Activated naive CD4-positive, alpha-beta T cell treated with anti-CD3 and anti-CD28 coated beads for 36 hours (primary cell): ENCODE measurements at regions of chr13 and their contacts with region 1.

Region 1: GRCh38 chr13:100129605-100130004 is 40.7 kb downstream of the PCCA start:
- DNase-seq: no peak
- H3K4me3 Mint-ChIP-seq: no peak overlapping the region
- H3K27ac Mint-ChIP-seq: no peak overlapping the region
- H3K4me1 Mint-ChIP-seq: peaks cover 23% of the 10 kb centered on the region
- H3K27me3 Mint-ChIP-seq: no peaks in the 10 kb centered on the region

Region 2: DNA sequence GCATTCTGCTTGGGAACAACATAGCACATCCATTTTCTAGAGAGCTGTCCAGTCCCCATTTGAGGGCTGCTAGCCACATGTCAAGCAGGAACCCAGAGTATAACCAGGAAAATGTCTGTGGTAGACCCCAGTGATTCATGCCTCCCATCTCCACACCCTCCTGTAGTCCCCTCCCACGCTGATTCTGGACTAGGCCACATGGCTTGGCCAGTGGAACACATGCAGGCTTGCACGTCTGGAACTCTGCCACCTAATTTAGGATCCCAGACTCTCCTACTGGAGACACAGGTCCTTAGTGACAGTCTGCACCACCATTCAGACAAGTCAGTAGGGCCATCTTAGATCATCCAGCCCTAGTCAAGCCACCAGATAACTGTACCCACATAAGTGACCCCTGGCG is 307.9 kb before region 1 on chr13:
- CTCF ChIA-PET with region 1: no interaction called
- intact Hi-C with region 1: loop called (anchors 1 kb)
- DNase-seq: no peak
- H3K4me3 Mint-ChIP-seq: no peak overlapping the region
- H3K27ac Mint-ChIP-seq: no peak overlapping the region
- H3K4me1 Mint-ChIP-seq: peaks cover 16% of the 10 kb centered on the region
- H3K27me3 Mint-ChIP-seq: no peaks in the 10 kb centered on the region

Region 3: DNA sequence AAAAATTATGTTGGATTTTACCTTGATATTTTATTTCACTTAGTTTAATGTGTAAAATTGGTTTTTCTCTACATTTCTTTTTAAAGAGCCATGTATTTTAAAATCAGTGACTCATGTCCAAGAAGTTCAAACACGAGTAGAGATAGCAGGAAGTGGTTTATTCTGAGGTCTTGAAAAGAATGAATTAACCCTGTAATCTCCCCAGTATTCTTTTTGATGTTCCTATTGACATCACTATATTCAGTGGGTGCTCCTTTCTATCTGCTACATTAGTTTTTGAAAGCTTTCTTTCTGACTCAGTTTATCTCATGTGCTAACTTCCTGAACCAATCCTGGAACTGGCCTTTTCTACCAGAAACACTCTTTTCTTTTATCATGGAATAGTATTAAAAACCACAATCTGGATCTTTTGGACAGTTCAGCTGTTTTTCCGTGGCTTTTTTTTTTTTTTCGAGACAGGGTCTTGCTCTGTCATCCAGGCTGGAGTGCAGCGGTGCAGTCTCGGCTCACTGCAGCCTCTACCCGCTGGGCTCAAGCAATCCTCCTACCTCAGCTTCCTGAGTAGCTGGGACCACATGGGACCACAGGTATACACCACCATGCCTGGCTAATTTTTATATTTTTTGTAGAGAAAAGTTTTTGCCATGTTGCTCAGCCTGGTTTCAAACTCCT is 74.2 kb after region 1 on chr13:
- CTCF ChIA-PET with region 1: no interaction called
- intact Hi-C with region 1: loop called (anchors 1 kb)
- DNase-seq: peak; percentile 8
- H3K4me3 Mint-ChIP-seq: no peak overlapping the region
- H3K27ac Mint-ChIP-seq: peak overlapping the region; percentile 47
- H3K4me1 Mint-ChIP-seq: peaks cover 17% of the 10 kb centered on the region
- H3K27me3 Mint-ChIP-seq: no peaks in the 10 kb centered on the region

Region 4: GRCh38 chr13:100461309-100462030 is 331.9 kb after region 1 on chr13:
- CTCF ChIA-PET with region 1: no interaction called
- intact Hi-C with region 1: no loop called
- DNase-seq: no peak
- H3K4me3 Mint-ChIP-seq: no peak overlapping the region
- H3K27ac Mint-ChIP-seq: no peak overlapping the region
- H3K4me1 Mint-ChIP-seq: no peaks in the 10 kb centered on the region
- H3K27me3 Mint-ChIP-seq: no peaks in the 10 kb centered on the region

Region 5: DNA sequence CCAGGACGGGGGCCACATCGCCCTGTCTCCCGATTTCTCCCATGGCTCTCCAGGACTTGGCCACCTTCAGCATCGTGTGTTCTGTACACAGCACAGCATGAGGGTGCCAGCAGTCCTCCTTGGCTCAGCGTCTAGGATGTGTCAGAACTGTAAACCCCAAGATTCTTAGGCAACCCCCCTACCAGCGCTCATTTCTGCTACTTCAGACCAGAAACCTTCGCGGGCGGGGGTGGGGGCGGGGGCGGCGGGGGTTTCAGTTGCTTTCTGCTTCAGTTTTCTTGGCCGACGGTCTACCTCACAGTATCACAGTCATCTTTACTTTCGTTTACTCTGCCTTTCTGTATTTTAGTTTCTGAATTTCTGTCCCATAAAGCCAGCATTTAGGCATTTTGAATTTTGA is 376.5 kb after region 1 on chr13:
- CTCF ChIA-PET with region 1: no interaction called
- intact Hi-C with region 1: loop called (anchors 2 kb)
- DNase-seq: peak; percentile 59
- H3K4me3 Mint-ChIP-seq: peak overlapping the region; percentile 4
- H3K27ac Mint-ChIP-seq: no peak overlapping the region
- H3K4me1 Mint-ChIP-seq: peaks cover 14% of the 10 kb centered on the region
- H3K27me3 Mint-ChIP-seq: peaks cover 8% of the 10 kb centered on the region